T-cell (primary cell): ENCODE measurements at regions of chr1 and their contacts with region 1.

Region 1: GRCh38 chr1:45393718-45394302 is 53.6 kb upstream of the MUTYH start:
- DNase-seq: peak in 5 of 35 experiments; percentile 0 to 13 (median 1)
- ATAC-seq: peak in 3 of 4 experiments; percentile 19 to 53 (median 28)
- H3K4me3 ChIP-seq: no peak overlapping the region
- H3K4me3 Mint-ChIP-seq: peak overlapping the region in 1 of 3 donors; percentile 9
- H3K27ac ChIP-seq: peak overlapping the region; percentile 60
- H3K27ac Mint-ChIP-seq: peak overlapping the region; percentile 65 to 71
- H3K4me1 ChIP-seq: no peaks in the 10 kb centered on the region
- H3K4me1 Mint-ChIP-seq: peaks cover 0 to 20% (median 14%) of the 10 kb centered on the region in 3 donors
- H3K27me3 ChIP-seq: no peaks in the 10 kb centered on the region
- H3K27me3 Mint-ChIP-seq: no peaks in the 10 kb centered on the region

Region 2: GRCh38 chr1:45230540-45230939 is 163.3 kb before region 1 on chr1:
- CTCF ChIA-PET with region 1: no interaction called
- POLR2A ChIA-PET with region 1: interaction called in 1 of 2 experiments, 11 read pairs
- DNase-seq: peak in 12 of 35 experiments; percentile 1 to 47 (median 6)
- ATAC-seq: peak in 2 of 4 experiments; percentile 43 to 46
- H3K4me3 ChIP-seq: no peak overlapping the region
- H3K4me3 Mint-ChIP-seq: no peak overlapping the region
- H3K27ac ChIP-seq: no peak overlapping the region
- H3K27ac Mint-ChIP-seq: no peak overlapping the region
- H3K4me1 ChIP-seq: no peaks in the 10 kb centered on the region
- H3K4me1 Mint-ChIP-seq: no peaks in the 10 kb centered on the region
- H3K27me3 ChIP-seq: no peaks in the 10 kb centered on the region
- H3K27me3 Mint-ChIP-seq: no peaks in the 10 kb centered on the region

Region 3: DNA sequence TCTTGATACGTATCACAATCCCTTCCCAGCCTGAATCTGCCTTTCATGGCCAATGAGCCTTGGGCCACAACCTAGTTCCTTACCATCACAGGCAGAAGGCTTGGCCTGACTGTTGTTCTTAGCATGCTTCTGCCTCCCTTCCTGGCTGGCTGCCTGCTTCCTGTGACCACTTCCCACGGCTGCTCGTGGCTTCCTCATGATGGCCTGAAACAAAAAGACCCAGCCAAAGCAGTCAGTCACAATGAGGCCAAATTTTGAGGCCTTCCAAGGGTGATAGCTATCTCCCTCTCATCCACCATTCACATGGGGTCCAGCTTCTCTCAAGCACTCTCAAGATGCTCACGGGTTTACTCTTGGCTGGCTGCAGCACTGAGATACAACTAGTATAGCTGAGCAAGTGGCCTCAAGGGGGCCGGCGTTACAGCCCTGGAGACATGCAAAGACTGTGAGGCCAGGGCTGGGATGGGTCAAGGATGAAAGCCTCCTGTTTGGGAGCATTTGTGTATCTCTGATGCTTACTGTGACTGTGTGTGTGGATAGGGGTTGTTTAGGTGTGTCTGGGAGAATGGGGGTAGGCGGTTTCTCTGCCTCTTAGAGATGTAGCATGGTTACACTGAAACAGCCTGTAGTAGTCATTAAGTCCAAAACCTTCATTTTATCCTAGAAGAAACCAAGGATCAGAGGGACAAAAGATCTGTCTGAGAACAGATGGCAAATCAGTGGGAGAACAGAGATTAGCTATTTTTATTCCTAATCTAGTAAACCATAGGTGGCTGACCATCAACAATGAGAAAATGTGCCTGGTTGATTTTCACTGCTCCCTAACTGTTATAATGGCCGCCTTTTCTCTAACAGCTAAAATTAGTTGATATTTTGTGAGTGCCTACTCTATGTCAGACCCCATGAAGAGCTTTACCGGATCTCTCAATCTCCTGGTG is 59.2 kb before region 1 on chr1:
- CTCF ChIA-PET with region 1: interaction called in 1 of 2 experiments, 3 read pairs
- POLR2A ChIA-PET with region 1: interaction called in 1 of 2 experiments, 16 read pairs
- DNase-seq: no peak
- ATAC-seq: no peak
- H3K4me3 ChIP-seq: no peak overlapping the region
- H3K4me3 Mint-ChIP-seq: no peak overlapping the region
- H3K27ac ChIP-seq: no peak overlapping the region
- H3K27ac Mint-ChIP-seq: no peak overlapping the region
- H3K4me1 ChIP-seq: peaks cover 0 to 18% of the 10 kb centered on the region in 2 experiments
- H3K4me1 Mint-ChIP-seq: peaks cover 42 to 46% (median 44%) of the 10 kb centered on the region in 3 donors
- H3K27me3 ChIP-seq: no peaks in the 10 kb centered on the region
- H3K27me3 Mint-ChIP-seq: no peaks in the 10 kb centered on the region

Region 4: DNA sequence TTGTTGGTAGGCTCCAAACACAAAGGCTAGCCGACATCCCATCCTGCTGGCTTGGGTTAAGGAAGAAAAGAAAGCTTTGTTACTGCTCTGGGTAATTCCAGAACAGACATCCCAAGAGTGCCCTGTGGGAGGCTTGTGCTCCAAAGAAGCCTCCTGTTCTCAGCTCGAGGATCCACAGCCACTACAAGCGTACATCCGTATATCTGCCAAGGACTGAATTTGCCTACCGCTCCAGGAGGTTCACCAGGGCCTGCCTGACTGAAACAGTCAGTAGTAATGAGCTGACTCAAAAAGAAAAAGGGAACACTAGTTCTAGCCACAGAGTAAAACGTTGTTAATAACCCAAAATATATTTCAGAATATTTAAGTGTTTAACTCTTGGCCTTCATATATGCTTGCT is 28.8 kb before region 1 on chr1:
- CTCF ChIA-PET with region 1: no interaction called
- POLR2A ChIA-PET with region 1: no interaction called
- DNase-seq: no peak
- ATAC-seq: no peak
- H3K4me3 ChIP-seq: no peak overlapping the region
- H3K4me3 Mint-ChIP-seq: no peak overlapping the region
- H3K27ac ChIP-seq: no peak overlapping the region
- H3K27ac Mint-ChIP-seq: no peak overlapping the region
- H3K4me1 ChIP-seq: no peaks in the 10 kb centered on the region
- H3K4me1 Mint-ChIP-seq: peaks cover 2 to 3% (median 2%) of the 10 kb centered on the region in 3 donors
- H3K27me3 ChIP-seq: no peaks in the 10 kb centered on the region
- H3K27me3 Mint-ChIP-seq: no peaks in the 10 kb centered on the region